B cell (primary cell): ENCODE measurements at regions of chr17 and their contacts with region 1.

Region 1: GRCh38 chr17:8079291-8080207 is 8.0 kb downstream of the ALOX12B start:
- DNase-seq: peak; percentile 90
- ATAC-seq: peak; percentile 82
- H3K4me3 ChIP-seq: peak overlapping the region in 4 of 5 experiments; percentile 57 to 76 (median 70)
- H3K4me3 Mint-ChIP-seq: peak overlapping the region; percentile 96
- H3K27ac ChIP-seq: peak overlapping the region; percentile 48 to 75
- H3K27ac Mint-ChIP-seq: peak overlapping the region; percentile 92
- H3K4me1 ChIP-seq: peaks cover 9 to 15% of the 10 kb centered on the region in 2 donors
- H3K4me1 Mint-ChIP-seq: peaks cover 14% of the 10 kb centered on the region
- H3K27me3 ChIP-seq: peaks cover 0 to 19% (median 10%) of the 10 kb centered on the region in 4 experiments
- H3K27me3 Mint-ChIP-seq: peaks cover 6% of the 10 kb centered on the region
- CTCF ChIP-seq: peak; percentile 90

Region 2: DNA sequence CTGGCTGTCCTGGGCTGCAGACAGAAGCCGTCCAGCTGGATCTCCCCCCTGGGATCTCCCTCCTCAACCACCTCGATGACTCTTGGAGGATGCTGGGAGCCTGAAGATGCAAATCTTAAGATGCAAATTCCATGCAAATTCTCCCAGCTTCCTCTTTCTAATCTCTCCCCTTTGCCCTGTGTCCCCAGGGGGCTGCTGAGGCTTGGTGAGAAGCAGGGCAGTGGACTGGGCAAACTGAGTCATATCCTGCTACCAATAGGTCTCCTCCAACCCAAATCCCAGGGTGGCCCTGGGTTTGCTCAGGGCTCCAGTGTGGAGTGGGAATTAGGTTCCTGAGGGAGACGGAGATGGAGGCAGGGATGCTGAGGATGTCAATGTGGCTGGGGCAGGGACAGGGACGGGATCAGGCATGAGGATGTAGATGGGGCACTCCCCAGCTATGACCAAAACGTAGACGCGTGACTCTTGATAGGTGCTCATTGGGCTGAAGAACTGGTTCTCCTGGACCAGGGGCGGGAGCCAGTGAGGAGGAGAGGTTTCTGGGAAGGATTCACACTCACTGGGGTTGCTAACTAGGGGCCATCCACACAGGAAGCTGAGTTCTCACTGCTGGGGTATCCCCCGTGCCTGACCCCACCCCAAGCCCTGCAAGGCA is 11.6 kb after region 1 on chr17:
- CTCF ChIA-PET with region 1: interaction called, 165 read pairs
- POLR2A ChIA-PET with region 1: interaction called, 8 read pairs
- intact Hi-C with region 1: loop called (anchors 1 kb)
- DNase-seq: peak; percentile 90
- ATAC-seq: peak; percentile 90
- H3K4me3 ChIP-seq: peak overlapping the region in 3 of 5 experiments; percentile 4 to 47 (median 29)
- H3K4me3 Mint-ChIP-seq: peak overlapping the region; percentile 78
- H3K27ac ChIP-seq: peak overlapping the region in 1 of 2 donors; percentile 55
- H3K27ac Mint-ChIP-seq: peak overlapping the region; percentile 92
- H3K4me1 ChIP-seq: peaks cover 26 to 43% of the 10 kb centered on the region in 2 donors
- H3K4me1 Mint-ChIP-seq: peaks cover 35% of the 10 kb centered on the region
- H3K27me3 ChIP-seq: no peaks in the 10 kb centered on the region
- H3K27me3 Mint-ChIP-seq: peaks cover 12% of the 10 kb centered on the region
- CTCF ChIP-seq: no peak

Region 3: GRCh38 chr17:8109661-8110464 is 30.3 kb after region 1 on chr17:
- CTCF ChIA-PET with region 1: interaction called, 360 read pairs
- POLR2A ChIA-PET with region 1: no interaction called
- intact Hi-C with region 1: loop called (anchors 1 kb)
- DNase-seq: peak; percentile 87
- ATAC-seq: peak; percentile 92
- H3K4me3 ChIP-seq: peak overlapping the region in 4 of 5 experiments; percentile 37 to 56 (median 52)
- H3K4me3 Mint-ChIP-seq: peak overlapping the region; percentile 68
- H3K27ac ChIP-seq: no peak overlapping the region
- H3K27ac Mint-ChIP-seq: peak overlapping the region; percentile 53
- H3K4me1 ChIP-seq: peaks cover 10 to 11% of the 10 kb centered on the region in 2 donors
- H3K4me1 Mint-ChIP-seq: peaks cover 10% of the 10 kb centered on the region
- H3K27me3 ChIP-seq: peaks cover 0 to 52% (median 32%) of the 10 kb centered on the region in 4 experiments
- H3K27me3 Mint-ChIP-seq: peaks cover 36% of the 10 kb centered on the region
- CTCF ChIP-seq: peak; percentile 93